ENCODE measurements at regions of chr12 and their contacts with region 1.

Region 1: DNA sequence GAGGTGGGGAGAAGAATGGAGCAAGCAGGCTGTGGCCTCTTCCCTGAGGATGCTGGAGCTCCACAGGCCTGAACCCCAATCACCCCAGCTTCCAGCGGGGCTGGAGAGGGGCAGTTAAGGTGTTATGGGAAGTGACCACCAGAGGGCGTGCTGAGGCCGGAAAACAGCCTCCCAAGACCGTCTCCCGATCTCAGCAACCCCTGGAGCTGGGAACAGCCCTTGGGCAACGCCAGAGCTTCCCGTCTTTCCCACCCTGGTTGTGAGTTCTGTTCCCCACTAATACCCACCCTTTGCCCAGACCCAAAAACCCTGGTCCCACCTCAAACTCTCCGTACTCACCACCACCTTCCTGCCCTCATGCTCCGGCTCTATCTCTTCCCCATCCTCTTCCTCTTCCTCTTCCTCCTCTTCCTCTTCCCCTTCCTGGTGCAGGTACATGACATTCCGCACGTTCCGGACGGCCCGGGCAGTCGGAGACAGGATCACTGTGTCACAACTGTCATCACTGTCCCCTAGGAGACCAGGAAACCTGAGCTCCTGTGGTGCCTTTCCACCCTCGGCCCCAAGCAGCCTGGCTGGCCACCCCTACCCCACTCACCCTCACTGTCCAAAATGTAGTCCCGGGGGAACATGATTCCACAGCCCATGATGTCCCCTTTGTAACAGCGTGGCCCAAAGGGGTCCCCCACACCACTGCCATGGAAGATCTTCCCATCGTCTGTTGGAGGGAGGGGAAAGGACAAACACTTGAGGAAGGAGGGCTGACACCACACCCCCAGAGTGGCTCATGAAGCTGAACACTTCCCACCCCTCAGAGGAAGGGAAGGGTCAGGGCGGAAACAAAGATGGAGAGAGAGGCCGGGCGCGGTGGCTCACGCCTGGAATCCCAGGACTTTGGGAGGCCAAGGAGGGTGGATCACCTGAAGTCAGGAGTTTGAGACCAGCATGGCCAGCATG is 12.9 kb downstream of the SPRYD3 start:
- DNase-seq: peak; percentile 86
- ATAC-seq: peak; percentile 57

Region 2: DNA sequence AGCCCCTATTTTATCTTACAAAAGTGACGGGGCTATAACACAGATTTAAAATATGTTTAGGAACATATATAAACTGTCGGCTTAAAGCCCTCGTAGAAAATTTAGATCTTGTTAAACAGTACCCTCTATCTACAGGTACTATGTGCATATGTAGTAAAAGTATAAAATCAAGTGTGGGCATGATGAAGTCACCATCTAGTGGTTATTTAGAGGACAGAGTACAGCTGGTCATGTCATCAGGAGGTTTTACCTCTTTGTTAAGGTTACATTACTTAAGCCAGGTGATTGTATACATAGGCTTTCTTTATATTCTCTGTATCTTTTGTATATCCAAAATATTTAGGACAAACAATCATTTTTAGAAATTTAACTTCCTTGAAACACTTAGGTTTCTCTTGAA is 34.6 kb before region 1 on chr12:
- intact Hi-C with region 1: no loop called
- DNase-seq: no peak
- ATAC-seq: no peak

Region 3: GRCh38 chr12:53052419-53053217 is 13.6 kb before region 1 on chr12:
- intact Hi-C with region 1: loop called (anchors 1 kb)
- DNase-seq: peak; percentile 95
- ATAC-seq: peak; percentile 34

Region 4: DNA sequence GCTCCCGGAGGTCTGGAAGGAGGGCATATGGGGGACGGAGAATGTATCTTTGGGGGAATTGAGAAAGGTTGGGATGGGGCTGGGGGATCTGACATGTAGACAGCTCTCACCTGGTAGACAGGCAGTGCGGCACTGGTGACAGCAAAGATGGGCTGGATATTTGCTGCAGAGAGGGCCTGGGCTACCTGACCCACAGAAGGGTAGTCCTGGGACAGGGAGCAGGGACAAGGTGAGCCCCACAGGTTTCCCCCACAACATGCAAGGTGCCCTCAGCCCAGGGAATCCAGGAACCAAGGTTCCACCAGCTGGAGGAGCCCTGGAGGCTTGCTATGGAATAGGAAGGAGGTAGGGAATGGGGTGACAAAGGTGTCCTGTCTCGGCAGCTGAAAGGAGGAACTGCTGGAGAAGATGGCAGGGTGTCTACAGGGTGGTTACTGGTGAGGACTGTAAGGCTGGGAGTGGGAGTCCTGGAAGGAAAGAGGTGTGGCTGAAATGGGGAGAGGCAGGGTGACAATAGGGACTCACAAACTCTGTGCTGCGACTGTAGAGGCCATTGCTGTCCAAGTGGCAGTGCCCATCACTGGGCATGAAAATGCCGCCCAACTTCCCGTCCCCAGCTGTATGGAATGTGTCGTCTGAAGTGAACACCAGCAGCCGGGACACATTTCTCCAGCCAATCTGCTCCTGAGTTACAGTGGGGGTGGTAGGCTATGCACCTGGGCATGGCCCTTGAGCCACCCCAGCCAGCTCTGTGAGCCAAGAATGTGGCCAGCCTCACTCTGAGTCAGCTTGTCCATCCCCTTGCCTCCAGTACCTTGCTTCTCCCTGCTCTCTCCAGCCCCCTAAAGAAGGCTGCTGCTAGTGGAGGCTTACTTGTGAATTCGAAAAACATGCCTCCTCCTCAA is 129.5 kb after region 1 on chr12:
- intact Hi-C with region 1: loop called (anchors 1 kb)
- DNase-seq: no peak
- ATAC-seq: no peak

Region 5: DNA sequence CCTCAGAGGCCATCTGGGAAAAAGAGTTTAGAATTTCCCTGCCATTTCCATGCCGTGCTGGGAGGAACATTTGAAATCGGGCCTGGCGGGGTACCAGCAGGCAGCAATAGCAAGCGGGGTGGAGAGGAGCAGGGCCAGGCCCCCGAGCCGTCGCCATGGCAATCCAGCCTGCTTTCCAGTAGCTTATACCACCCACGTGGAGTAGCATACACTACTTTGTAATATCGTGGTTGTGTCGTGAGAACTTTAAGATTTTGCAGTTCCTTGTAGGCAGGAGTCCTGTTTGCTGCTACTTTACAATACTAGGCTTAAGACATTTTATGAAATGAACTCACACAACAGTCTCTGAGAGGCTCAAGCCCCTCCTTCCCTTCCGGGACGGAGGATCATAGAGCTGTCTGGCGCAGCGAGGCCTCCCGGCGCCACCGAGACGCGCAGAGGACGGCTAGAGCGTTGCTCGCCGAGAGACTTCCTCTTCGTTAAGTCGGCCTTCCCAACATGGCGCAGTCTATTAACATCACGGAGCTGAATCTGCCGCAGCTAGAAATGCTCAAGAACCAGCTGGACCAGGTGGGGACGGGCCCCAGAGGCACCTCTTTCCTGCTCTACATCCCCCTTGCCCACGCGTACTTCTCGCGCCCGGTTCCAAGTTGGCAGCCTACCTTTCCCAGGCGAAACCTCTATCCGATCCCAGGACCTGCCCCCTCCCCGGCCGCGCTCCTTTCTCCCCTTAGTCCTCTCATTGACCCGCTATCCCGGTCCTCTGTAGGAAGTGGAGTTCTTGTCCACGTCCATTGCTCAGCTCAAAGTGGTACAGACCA is 229.0 kb after region 1 on chr12 and contains the start of gene PFDN5:
- intact Hi-C with region 1: loop called (anchors 5 kb)
- DNase-seq: peak; percentile 94
- ATAC-seq: peak; percentile 95
- total RNA-seq, gene PFDN5: 392 TPM

Region 6: DNA sequence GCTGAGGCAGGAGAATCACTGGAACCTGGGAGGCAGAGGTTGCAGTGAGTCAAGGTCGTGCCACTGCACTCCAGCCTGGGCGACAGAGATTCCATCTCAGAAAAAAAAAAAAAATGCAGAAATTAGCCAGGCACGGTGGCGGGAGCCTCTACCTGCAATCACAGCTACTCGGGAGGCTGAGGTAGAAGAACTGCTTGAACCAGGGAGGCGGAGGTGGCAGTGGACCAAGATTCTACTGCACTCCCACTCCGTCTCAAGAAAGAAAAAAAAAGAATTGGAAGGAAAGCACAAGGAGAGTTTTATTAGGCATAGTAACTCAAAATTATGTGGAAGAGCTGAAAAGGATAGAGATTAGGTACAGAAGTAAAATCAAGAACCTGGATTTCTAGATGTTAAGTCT is 336.6 kb after region 1 on chr12:
- intact Hi-C with region 1: no loop called
- DNase-seq: peak; percentile 42
- ATAC-seq: no peak